Tibial artery (tissue), 4 donors: ENCODE measurements at regions of chr5 and their contacts with region 1.

Region 1: DNA sequence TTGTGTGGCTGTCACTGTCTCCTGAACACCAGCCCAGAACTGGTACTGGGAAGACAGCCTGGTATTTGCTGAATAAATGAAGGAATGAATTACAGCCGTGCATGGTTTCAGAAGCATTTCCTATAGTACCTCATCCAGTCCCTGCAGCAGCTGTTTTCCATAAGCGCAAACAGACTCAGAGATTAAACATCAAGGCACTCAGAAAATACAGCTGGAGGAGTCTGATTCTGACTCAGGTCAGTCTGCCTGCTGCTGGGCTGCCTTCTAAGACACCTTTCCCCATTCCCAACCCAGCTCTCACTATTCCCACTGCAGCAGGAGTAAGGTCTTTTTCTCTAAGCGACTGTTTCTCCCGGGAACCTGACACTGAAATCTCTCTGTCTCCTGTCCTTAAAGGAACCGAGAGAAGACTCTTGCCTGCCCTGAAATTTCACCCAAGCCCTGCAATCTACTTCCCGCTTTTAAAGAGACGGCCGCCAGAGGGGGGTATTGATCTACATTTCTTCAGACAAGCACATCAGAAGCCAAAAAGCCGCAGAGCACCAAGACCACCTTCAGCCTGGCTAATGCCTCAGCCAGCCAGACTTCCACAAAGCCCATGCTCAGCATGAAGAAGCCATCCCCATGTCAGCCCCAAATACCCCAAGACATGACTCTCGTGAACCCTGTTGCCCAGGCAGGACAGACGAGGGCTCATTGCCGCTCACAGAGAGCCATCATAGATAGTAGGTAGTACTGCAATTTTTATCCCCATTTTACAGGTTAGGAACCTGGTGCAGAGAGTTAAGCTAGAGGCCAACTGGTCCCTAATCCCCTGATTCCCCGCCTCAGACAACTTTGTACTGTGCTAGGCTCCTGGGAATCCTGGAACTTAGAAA is 5.4 kb upstream of the FOXI1 start:
- DNase-seq: peak; percentile 84
- H3K4me3 ChIP-seq: no peak overlapping the region
- H3K27ac ChIP-seq: no peak overlapping the region
- H3K4me1 ChIP-seq: peaks cover 0 to 3% (median 0%) of the 10 kb centered on the region in 4 donors
- H3K27me3 ChIP-seq: peaks cover 0 to 6% of the 10 kb centered on the region in 2 donors
- CTCF ChIP-seq: peak; percentile 57 to 62

Region 2: GRCh38 chr5:170173235-170173634 is 72.9 kb after region 1 on chr5:
- intact Hi-C with region 1: no loop called
- DNase-seq: no peak
- H3K4me3 ChIP-seq: no peak overlapping the region
- H3K27ac ChIP-seq: no peak overlapping the region
- H3K4me1 ChIP-seq: no peaks in the 10 kb centered on the region
- H3K27me3 ChIP-seq: no peaks in the 10 kb centered on the region
- CTCF ChIP-seq: no peak

Region 3: DNA sequence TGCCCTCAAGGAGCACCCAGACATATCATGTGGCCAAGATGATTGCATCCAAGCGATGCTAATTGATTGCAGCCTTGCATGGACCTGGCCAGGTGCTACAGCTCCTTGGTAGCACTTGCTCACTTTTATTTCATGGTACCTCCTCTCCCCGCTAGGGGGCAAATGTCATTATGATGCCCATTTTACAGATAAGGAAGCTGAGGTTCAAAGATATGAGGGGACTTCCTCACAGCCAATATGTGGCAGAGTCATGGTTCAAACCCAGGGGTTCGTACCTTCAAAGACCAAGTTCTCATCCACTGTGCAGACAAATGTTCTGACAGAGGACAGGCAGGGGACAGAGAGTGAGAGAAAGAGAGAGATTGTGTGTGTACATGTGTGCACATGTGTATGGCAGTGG is 310.8 kb after region 1 on chr5:
- intact Hi-C with region 1: loop called (anchors 10 kb)
- DNase-seq: no peak
- H3K4me3 ChIP-seq: no peak overlapping the region
- H3K27ac ChIP-seq: no peak overlapping the region
- H3K4me1 ChIP-seq: peaks cover 0 to 13% (median 6%) of the 10 kb centered on the region in 4 donors
- H3K27me3 ChIP-seq: no peaks in the 10 kb centered on the region
- CTCF ChIP-seq: no peak